ENCODE measurements at regions of chr15 and their contacts with region 1.

Region 1: GRCh38 chr15:98779463-98780071 is 131.2 kb downstream of the IGF1R start:
- DNase-seq: peak; percentile 87
- ATAC-seq: peak; percentile 91

Region 2: GRCh38 chr15:98952381-98952803 is 172.8 kb after region 1 on chr15:
- intact Hi-C with region 1: no loop called
- DNase-seq: no peak
- ATAC-seq: no peak

Region 3: DNA sequence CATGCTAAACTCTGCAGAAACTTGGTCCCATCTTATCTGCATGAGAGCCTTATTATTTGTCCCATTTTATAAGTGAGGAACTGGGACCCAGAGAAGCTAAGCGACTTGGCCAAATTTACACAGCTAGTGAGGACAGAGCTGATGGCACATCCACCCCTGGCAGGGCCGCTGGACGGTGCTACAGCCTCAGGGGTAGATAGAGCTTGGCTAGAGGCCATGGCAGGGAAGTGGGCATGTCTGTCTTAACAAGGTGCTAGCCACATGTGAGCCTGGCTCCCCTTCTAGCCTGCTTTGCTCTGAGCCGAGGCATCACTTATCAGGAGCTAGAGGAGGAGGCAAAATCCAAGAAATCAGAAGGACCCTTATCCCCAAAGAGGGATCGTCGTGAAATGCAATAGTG is 288.6 kb after region 1 on chr15:
- intact Hi-C with region 1: loop called (anchors 10 kb)
- DNase-seq: no peak
- ATAC-seq: no peak

Measured in Right ventricle myocardium superior (tissue), 1 donor.